IMR-90 (cell line): ENCODE measurements at regions of chr18 and their contacts with region 1.

Region 1: GRCh38 chr18:34773961-34774766 is 64.1 kb downstream of the DTNA start:
- DNase-seq: peak; percentile 64
- ATAC-seq: no peak
- H3K4me3 ChIP-seq: no peak overlapping the region
- H3K27ac ChIP-seq: no peak overlapping the region
- H3K4me1 ChIP-seq: peaks cover 12% of the 10 kb centered on the region
- H3K27me3 ChIP-seq: no peaks in the 10 kb centered on the region
- CTCF ChIP-seq: no peak
- POLR2A ChIP-seq: no peak
- RAD21 ChIP-seq: no peak

Region 2: GRCh38 chr18:34707670-34708069 is 66.5 kb before region 1 on chr18:
- CTCF ChIA-PET with region 1: interaction called, 3 read pairs
- POLR2A ChIA-PET with region 1: no interaction called
- dilution Hi-C with region 1: no loop called
- in situ Hi-C with region 1: no loop called
- intact Hi-C with region 1: loop called (anchors 2 kb)
- DNase-seq: peak; percentile 92
- ATAC-seq: peak; percentile 22; the same call in 1 of the 2 replicates
- H3K4me3 ChIP-seq: no peak overlapping the region
- H3K27ac ChIP-seq: peak overlapping the region; percentile 49; the same call in 1 of the 2 replicates
- H3K4me1 ChIP-seq: peaks cover 7% of the 10 kb centered on the region
- H3K27me3 ChIP-seq: no peaks in the 10 kb centered on the region
- CTCF ChIP-seq: no peak
- POLR2A ChIP-seq: no peak
- RAD21 ChIP-seq: no peak

Region 3: DNA sequence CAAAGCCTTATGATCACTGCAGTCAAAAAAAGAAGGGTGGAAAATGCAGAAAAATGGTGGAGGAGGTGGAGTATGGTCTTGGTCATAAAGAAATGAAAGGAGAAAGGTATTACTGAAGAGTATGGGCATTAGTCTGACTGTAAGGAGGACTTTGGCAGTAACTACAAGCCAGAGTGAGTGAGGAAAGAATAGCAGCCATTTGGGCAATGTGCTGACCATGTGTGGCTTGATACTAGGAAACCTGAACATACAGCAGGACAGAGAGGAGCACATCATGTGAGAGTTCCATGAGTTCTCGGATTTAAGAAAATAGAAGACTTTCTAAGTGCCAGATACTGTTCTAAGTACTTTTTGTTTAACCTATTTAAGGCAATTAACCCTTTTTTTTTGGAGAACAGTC is 55.6 kb before region 1 on chr18:
- CTCF ChIA-PET with region 1: no interaction called
- POLR2A ChIA-PET with region 1: no interaction called
- dilution Hi-C with region 1: no loop called
- in situ Hi-C with region 1: no loop called
- intact Hi-C with region 1: no loop called
- DNase-seq: no peak
- ATAC-seq: no peak
- H3K4me3 ChIP-seq: no peak overlapping the region
- H3K27ac ChIP-seq: no peak overlapping the region
- H3K4me1 ChIP-seq: no peaks in the 10 kb centered on the region
- H3K27me3 ChIP-seq: no peaks in the 10 kb centered on the region
- CTCF ChIP-seq: no peak
- POLR2A ChIP-seq: no peak
- RAD21 ChIP-seq: no peak

Region 4: DNA sequence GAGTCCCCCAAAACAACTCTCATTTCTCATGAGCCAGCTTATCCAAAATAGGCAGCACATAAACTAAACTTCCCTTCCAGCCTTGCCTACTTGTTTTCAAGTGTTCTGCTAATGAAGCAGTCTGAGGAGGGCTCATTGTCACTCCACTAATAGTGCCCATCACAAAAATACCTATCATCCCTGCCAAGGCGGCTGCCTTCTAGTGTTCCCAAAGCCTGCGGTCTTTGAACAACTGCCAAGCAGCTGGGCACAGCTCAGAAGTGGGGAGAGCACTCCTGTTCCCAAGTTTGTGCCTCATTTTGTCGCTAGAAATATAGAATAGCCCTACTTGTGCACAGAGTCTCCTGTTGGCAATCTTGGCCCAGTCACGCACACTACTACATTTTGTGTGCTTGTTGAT is 13.7 kb before region 1 on chr18:
- CTCF ChIA-PET with region 1: no interaction called
- POLR2A ChIA-PET with region 1: interaction called, 16 read pairs
- dilution Hi-C with region 1: no loop called
- in situ Hi-C with region 1: no loop called
- intact Hi-C with region 1: no loop called
- DNase-seq: no peak
- ATAC-seq: no peak
- H3K4me3 ChIP-seq: no peak overlapping the region
- H3K27ac ChIP-seq: no peak overlapping the region
- H3K4me1 ChIP-seq: peaks cover 3% of the 10 kb centered on the region
- H3K27me3 ChIP-seq: no peaks in the 10 kb centered on the region
- CTCF ChIP-seq: no peak
- POLR2A ChIP-seq: no peak
- RAD21 ChIP-seq: no peak